RWPE1 (cell line): ENCODE measurements at regions of chr11 and their contacts with region 1.

Region 1: DNA sequence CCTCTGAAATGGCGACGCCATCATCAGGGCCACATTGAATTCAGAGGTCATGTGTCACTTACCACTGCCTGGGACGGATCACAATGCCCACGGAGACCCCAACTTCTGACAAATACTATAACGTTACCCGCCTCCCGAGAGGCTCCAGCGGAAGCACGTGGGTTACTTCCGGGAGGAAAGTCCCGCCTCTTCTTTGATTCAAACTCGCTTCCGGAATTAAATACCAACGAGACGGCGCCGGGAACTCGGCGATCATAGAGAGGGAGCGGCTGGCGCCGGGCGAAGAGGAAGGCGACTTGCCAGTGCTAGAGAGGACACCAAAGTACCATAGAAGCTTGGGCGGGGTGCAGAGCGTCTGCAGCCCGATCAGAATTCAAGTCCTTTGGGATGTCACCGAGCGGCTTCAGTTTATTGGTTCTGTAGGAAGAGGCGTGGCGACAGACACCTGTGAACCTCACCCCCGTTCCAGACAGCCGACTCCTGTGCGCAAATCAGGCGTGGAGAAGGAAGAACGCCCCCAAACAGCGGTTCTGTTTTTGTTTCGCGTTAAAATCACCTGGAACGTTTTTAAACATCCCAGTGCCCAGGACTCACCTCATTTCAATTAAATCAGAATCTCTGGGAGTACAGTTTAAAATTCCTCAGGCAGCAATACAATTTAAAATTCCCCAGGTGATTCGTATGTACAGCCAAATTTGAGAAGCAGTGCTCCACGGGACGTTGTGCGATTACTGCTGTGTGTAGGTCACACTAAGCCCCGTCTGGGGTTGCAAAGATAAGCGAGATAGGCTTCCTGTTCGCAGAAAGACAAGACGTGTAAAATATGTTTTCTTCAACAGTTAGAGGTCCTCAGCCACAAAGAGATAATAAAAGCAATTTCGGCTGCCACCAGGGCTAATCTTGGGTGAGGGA is at the start of gene TIMM10:
- DNase-seq: peak; percentile 91
- H3K27ac ChIP-seq: peak within 1 kb of the TSS; percentile 66
- CTCF ChIP-seq: no peak

Region 2: GRCh38 chr11:57493507-57494503 is 37.0 kb before region 1 on chr11:
- CTCF ChIA-PET with region 1: interaction called, 25 read pairs
- POLR2A ChIA-PET with region 1: interaction called, 3 read pairs
- DNase-seq: peak; percentile 60
- H3K27ac ChIP-seq: peak overlapping the region; percentile 55
- CTCF ChIP-seq: peak; percentile 82

Region 3: GRCh38 chr11:57515332-57516060 is 15.4 kb before region 1 on chr11 and contains the start of gene SLC43A1:
- CTCF ChIA-PET with region 1: interaction called, 19 read pairs
- POLR2A ChIA-PET with region 1: no interaction called
- DNase-seq: peak; percentile 25
- H3K27ac ChIP-seq: peak within 1 kb of the TSS; percentile 63
- CTCF ChIP-seq: no peak

Region 4: GRCh38 chr11:57680552-57680874 is 149.7 kb after region 1 on chr11:
- CTCF ChIA-PET with region 1: interaction called, 10 read pairs
- POLR2A ChIA-PET with region 1: no interaction called
- DNase-seq: peak; percentile 62
- H3K27ac ChIP-seq: peak overlapping the region; percentile 98
- CTCF ChIP-seq: no peak